Dendritic cell treated with granulocyte-macrophage colony-stimulating factor and Interleukin-4, amounts not matched to agents 40 ng/mL and 50 ng/mL, for 4 days (primary cell): ENCODE measurements at regions of chr13 and their contacts with region 1.

Region 1: GRCh38 chr13:27449936-27450828 is at the start of gene MTIF3:
- H3K4me3 Mint-ChIP-seq: peak within 1 kb of the TSS; percentile 91
- H3K27ac Mint-ChIP-seq: peak within 1 kb of the TSS; percentile 88
- H3K4me1 Mint-ChIP-seq: peaks cover 42% of the 10 kb centered on the region
- H3K27me3 Mint-ChIP-seq: peaks cover 7% of the 10 kb centered on the region

Region 2: GRCh38 chr13:27374650-27375049 is 75.5 kb before region 1 on chr13:
- intact Hi-C with region 1: loop called (anchors 5 kb)
- H3K4me3 Mint-ChIP-seq: no peak overlapping the region
- H3K27ac Mint-ChIP-seq: no peak overlapping the region
- H3K4me1 Mint-ChIP-seq: no peaks in the 10 kb centered on the region
- H3K27me3 Mint-ChIP-seq: peaks cover 9% of the 10 kb centered on the region

Region 3: DNA sequence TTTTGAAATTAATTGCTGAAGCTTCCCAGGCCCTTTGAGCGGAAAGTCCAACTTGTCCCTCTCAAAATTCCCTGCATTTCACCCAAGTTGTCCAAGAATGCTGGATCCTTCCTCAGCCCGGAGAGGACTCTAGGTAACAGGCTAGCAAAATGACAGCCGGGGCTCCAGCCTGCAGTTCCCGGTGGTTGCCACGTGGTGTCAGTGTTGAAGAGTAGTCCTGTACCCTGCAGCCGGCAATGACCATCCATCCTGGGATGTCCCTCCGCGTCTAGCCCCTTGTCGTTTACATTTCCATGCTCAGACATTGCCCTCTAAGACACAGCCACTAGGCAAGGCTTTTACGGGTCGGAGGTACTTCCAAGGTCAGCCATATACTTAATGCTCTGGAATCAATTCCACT is 31.6 kb after region 1 on chr13:
- intact Hi-C with region 1: loop called (anchors 2 kb)
- H3K4me3 Mint-ChIP-seq: no peak overlapping the region
- H3K27ac Mint-ChIP-seq: peak overlapping the region; percentile 86
- H3K4me1 Mint-ChIP-seq: peaks cover 19% of the 10 kb centered on the region
- H3K27me3 Mint-ChIP-seq: no peaks in the 10 kb centered on the region